ENCODE measurements at regions of chr17 and their contacts with region 1.

Region 1: GRCh38 chr17:27601069-27601975 is 29.7 kb upstream of the LGALS9 start:
- DNase-seq: peak; percentile 81
- ATAC-seq: peak; percentile 44

Region 2: DNA sequence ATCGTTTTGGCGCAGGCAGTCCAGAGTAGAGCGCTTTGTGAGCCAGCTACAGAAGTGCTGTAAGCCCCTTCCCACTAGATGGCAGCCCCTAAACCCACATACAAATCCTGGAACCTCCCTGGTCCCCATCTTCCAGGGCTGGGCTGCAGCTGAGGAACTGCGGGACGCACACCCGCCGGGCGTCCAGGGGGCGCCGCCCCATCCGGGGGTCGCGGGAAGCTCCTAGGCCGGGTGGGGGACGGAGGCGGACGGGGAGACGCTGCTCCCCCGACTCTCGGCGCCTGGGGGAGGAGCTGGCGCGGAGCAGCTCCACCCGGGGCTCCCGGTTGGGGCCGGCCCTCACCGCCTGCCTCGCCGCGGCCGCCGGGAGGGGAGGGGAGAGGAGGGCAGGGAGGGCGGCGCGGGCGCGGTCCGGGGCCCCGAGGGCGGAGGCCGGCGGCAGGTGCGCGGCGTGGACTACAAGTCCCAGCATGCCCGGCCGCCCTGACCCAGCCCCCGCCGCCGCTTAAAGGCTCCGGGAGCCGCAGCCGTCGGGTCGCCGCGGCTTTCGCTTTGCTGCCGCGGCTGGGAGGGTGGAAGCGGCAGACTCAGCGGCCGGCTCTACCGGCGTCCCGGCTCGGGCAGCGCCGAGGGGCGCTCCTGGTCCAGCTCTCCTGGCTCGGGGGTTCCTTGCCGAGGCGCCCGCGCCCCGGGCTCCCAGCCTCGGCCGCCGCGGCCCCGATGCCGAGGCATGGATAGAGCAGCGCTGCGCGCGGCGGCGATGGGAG is 145.2 kb before region 1 on chr17 and contains the start of gene KSR1:
- intact Hi-C with region 1: loop called (anchors 2 kb)
- DNase-seq: peak; percentile 95
- ATAC-seq: peak; percentile 92
- total RNA-seq, gene KSR1: 9.5 TPM

Region 3: GRCh38 chr17:27519550-27519949 is 81.8 kb before region 1 on chr17:
- intact Hi-C with region 1: no loop called
- DNase-seq: no peak
- ATAC-seq: no peak

Measured in Right ventricle myocardium inferior (tissue), 1 donor.